Heart left ventricle (tissue), 16 donors: ENCODE measurements at regions of chr9 and their contacts with region 1.

Region 1: DNA sequence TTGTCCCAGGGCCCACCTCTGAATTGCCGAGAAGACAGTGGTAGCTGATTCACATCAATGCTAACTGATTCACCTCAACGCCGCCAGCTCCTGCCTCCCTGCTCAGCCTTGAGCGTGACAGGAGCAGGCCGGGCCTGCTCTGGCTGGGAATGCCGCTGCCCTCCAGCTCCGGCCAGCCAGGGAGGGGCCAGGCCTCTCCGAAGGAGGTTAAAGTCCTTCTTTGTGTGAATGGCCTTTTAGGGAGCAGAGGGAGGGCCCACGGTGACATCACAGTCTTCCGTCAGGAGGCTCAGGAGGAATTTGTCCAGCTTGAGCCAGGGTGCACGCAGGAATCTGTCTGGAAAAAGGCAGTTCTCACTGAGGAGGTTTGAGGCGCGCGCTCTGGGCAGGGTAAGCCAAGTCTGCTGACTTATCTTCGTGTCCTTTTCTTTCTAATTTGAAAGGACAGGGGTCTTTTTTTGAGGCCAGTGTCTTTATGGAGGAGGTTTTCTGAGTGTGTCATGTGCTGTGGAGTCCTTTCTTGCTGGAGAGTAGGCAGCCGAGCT is 82.7 kb downstream of the C9orf152 start:
- DNase-seq: peak; percentile 88 to 94 (median 90)
- ATAC-seq: peak; percentile 85 to 90 (median 88)
- H3K4me3 ChIP-seq: peak overlapping the region in 11 of 12 donors; percentile 21 to 56 (median 46)
- H3K27ac ChIP-seq: peak overlapping the region; percentile 74 to 93 (median 90)
- H3K4me1 ChIP-seq: peaks cover 14 to 90% (median 74%) of the 10 kb centered on the region in 12 donors
- H3K27me3 ChIP-seq: no peaks in the 10 kb centered on the region
- CTCF ChIP-seq: no peak
- POLR2A ChIP-seq: peak in 1 of 2 donors; percentile 86

Region 2: DNA sequence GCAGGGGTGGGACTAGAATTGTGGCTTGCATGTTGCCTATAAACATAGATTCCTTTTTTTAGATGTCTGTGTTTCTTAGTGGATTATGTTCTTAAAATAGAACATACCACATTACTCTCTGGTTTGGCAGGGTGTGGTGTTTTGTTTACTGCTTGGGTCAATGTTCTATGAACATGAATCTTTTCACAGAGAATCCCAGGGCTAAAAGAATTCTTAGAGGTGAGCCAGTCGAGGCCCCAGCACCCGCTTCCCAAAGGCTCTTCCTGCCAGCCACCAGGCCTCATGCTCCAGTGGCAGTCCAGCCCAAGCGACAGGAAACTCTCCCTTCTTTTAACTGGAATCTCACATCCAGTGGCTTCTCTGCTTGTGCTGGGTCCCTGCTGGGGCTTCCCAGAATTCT is 43.9 kb before region 1 on chr9:
- intact Hi-C with region 1: loop called in 2 of 10 experiments (anchors 5 kb)
- DNase-seq: peak in 1 of 5 donors; percentile 29
- ATAC-seq: peak; percentile 66 to 79 (median 76)
- H3K4me3 ChIP-seq: no peak overlapping the region
- H3K27ac ChIP-seq: peak overlapping the region; percentile 45 to 86 (median 76)
- H3K4me1 ChIP-seq: peaks cover 11 to 80% (median 57%) of the 10 kb centered on the region in 12 donors
- H3K27me3 ChIP-seq: no peaks in the 10 kb centered on the region
- CTCF ChIP-seq: no peak
- POLR2A ChIP-seq: no peak

Region 3: GRCh38 chr9:110152704-110153374 is 27.6 kb after region 1 on chr9:
- intact Hi-C with region 1: no loop called
- DNase-seq: no peak
- ATAC-seq: peak in 3 of 4 donors; percentile 4 to 29 (median 22)
- H3K4me3 ChIP-seq: no peak overlapping the region
- H3K27ac ChIP-seq: peak overlapping the region in 4 of 12 donors; percentile 12 to 58 (median 37)
- H3K4me1 ChIP-seq: peaks cover 29 to 100% (median 88%) of the 10 kb centered on the region in 12 donors
- H3K27me3 ChIP-seq: no peaks in the 10 kb centered on the region
- CTCF ChIP-seq: peak; percentile 54 to 79 (median 72)
- POLR2A ChIP-seq: no peak